ENCODE measurements at regions of chrX and their contacts with region 1.

Region 1: DNA sequence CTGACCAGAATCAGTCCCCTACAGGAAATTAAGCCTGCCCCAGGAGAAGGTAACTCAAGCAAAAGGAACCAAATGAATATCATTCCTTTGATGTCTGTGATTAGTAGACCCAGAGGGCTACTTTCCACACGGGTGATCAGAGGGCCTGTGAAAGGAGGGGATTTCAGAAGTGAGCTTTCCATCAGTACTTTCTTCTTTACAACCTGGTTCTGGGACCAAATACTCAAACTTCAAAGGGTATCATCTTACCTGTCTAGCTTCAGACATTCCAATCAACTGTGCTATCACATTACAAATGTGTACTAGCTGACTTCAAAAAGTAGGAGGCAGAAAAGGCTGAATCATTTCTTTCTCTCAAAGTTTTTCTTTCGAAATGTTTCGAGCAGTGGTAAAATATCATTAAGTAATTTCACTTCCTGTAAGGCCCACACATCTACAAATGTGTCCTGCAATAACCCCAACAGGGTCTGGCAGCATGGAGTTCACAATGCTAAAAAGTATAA is 23.9 kb downstream of the ACSL4 start:
- DNase-seq: peak; percentile 30
- H3K4me3 ChIP-seq: no peak overlapping the region
- H3K4me3 Mint-ChIP-seq: no peak overlapping the region
- H3K27ac Mint-ChIP-seq: no peak overlapping the region
- H3K4me1 ChIP-seq: peaks cover 3% of the 10 kb centered on the region; the same call in 1 of the 2 replicates
- H3K4me1 Mint-ChIP-seq: no peaks in the 10 kb centered on the region
- H3K27me3 ChIP-seq: no peaks in the 10 kb centered on the region
- H3K27me3 Mint-ChIP-seq: no peaks in the 10 kb centered on the region
- CTCF ChIP-seq: no peak

Region 2: GRCh38 chrX:109619771-109620170 is 89.4 kb before region 1 on chrX:
- CTCF ChIA-PET with region 1: no interaction called
- POLR2A ChIA-PET with region 1: no interaction called
- intact Hi-C with region 1: no loop called
- DNase-seq: no peak
- H3K4me3 ChIP-seq: no peak overlapping the region
- H3K4me3 Mint-ChIP-seq: no peak overlapping the region
- H3K27ac Mint-ChIP-seq: no peak overlapping the region
- H3K4me1 ChIP-seq: no peaks in the 10 kb centered on the region
- H3K4me1 Mint-ChIP-seq: no peaks in the 10 kb centered on the region
- H3K27me3 ChIP-seq: no peaks in the 10 kb centered on the region
- H3K27me3 Mint-ChIP-seq: no peaks in the 10 kb centered on the region
- CTCF ChIP-seq: no peak

Region 3: GRCh38 chrX:109660435-109661143 is 48.6 kb before region 1 on chrX:
- CTCF ChIA-PET with region 1: no interaction called
- POLR2A ChIA-PET with region 1: no interaction called
- intact Hi-C with region 1: no loop called
- DNase-seq: no peak
- H3K4me3 ChIP-seq: no peak overlapping the region
- H3K4me3 Mint-ChIP-seq: no peak overlapping the region
- H3K27ac Mint-ChIP-seq: no peak overlapping the region
- H3K4me1 ChIP-seq: no peaks in the 10 kb centered on the region
- H3K4me1 Mint-ChIP-seq: no peaks in the 10 kb centered on the region
- H3K27me3 ChIP-seq: no peaks in the 10 kb centered on the region
- H3K27me3 Mint-ChIP-seq: no peaks in the 10 kb centered on the region
- CTCF ChIP-seq: no peak

Region 4: DNA sequence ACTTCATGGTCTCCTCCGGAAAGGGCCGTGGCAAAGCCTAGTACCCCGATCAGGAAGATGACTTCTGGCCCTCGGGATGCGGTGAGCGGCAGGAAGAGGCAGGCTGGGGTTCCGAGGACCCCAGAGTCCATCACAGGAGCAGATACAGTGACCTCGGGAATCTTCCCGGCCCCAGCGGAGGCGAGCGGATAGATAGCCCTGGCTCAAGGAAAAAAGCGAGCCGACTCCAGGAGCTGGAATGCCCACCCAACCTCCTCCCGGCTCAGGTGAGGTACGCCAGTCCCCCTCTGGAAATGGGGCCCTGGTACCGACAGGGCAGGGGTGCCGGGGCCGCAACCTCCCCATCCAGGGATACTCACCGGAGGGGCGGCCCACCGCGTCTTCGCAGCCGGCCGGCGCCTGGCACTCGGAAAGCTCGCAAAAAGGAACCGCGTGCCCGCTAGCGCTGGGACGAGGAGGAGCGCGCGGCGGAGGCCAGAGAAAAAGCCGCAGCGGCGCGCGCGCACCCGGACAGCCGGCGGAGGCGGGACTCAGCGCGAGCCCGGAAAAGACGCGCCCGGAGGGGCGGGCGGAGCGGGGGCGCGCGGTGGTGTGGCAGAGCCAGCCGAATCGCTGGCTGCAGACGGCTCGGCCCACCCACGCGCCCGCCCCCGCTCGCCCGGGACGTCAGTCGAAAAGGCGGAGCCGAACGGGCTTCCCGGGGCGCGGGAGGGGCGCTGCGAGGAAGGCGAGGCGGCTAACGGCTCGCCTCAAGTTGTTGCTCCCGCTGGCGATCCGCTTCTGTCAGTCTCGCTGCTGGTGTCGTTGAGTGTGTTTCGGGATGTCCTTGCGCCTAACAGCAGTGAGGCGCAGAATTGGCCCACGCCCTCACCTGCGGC is 23.8 kb after region 1 on chrX and contains the start of gene ACSL4:
- CTCF ChIA-PET with region 1: interaction called, 11 read pairs
- POLR2A ChIA-PET with region 1: no interaction called
- intact Hi-C with region 1: no loop called
- DNase-seq: peak; percentile 78 to 86
- H3K4me3 ChIP-seq: peak within 1 kb of the TSS; percentile 76
- H3K4me3 Mint-ChIP-seq: peak within 1 kb of the TSS; percentile 98
- H3K27ac Mint-ChIP-seq: peak within 1 kb of the TSS; percentile 96
- H3K4me1 ChIP-seq: no peaks in the 10 kb centered on the region; the same call in 1 of the 2 replicates
- H3K4me1 Mint-ChIP-seq: peaks cover 6% of the 10 kb centered on the region
- H3K27me3 ChIP-seq: no peaks in the 10 kb centered on the region
- H3K27me3 Mint-ChIP-seq: no peaks in the 10 kb centered on the region
- CTCF ChIP-seq: no peak
- total RNA-seq, gene ACSL4: 36.3 and 38.3 TPM in 2 replicates

Region 5: GRCh38 chrX:109890895-109891502 is 181.8 kb after region 1 on chrX:
- CTCF ChIA-PET with region 1: interaction called, 15 read pairs
- POLR2A ChIA-PET with region 1: no interaction called
- intact Hi-C with region 1: loop called (anchors 1 kb)
- DNase-seq: peak; percentile 58 to 60
- H3K4me3 ChIP-seq: no peak overlapping the region
- H3K4me3 Mint-ChIP-seq: no peak overlapping the region
- H3K27ac Mint-ChIP-seq: no peak overlapping the region
- H3K4me1 ChIP-seq: no peaks in the 10 kb centered on the region
- H3K4me1 Mint-ChIP-seq: no peaks in the 10 kb centered on the region
- H3K27me3 ChIP-seq: no peaks in the 10 kb centered on the region
- H3K27me3 Mint-ChIP-seq: no peaks in the 10 kb centered on the region
- CTCF ChIP-seq: peak; percentile 65 to 73